Activated CD8-positive, alpha-beta memory T cell treated with anti-CD3 and anti-CD28 coated beads, Interleukin-2, amount 10 ng/mL, durations not matched to agents 7 days and 5 days (primary cell): ENCODE measurements at regions of chr10 and their contacts with region 1.

Region 1: GRCh38 chr10:102384053-102384452 is 11.5 kb upstream of the NFKB2 start:
- DNase-seq: no peak
- ATAC-seq: no peak
- H3K4me3 Mint-ChIP-seq: no peak overlapping the region
- H3K27ac Mint-ChIP-seq: no peak overlapping the region
- H3K4me1 Mint-ChIP-seq: no peaks in the 10 kb centered on the region
- H3K27me3 Mint-ChIP-seq: no peaks in the 10 kb centered on the region

Region 2: GRCh38 chr10:101774589-101775272 is 609.3 kb before region 1 on chr10:
- CTCF ChIA-PET with region 1: no interaction called
- DNase-seq: no peak
- ATAC-seq: no peak
- H3K4me3 Mint-ChIP-seq: no peak overlapping the region
- H3K27ac Mint-ChIP-seq: no peak overlapping the region
- H3K4me1 Mint-ChIP-seq: peaks cover 12% of the 10 kb centered on the region
- H3K27me3 Mint-ChIP-seq: peaks cover 69% of the 10 kb centered on the region

Region 3: GRCh38 chr10:102334101-102334500 is 50.0 kb before region 1 on chr10:
- CTCF ChIA-PET with region 1: no interaction called
- DNase-seq: no peak
- ATAC-seq: no peak
- H3K4me3 Mint-ChIP-seq: no peak overlapping the region
- H3K27ac Mint-ChIP-seq: no peak overlapping the region
- H3K4me1 Mint-ChIP-seq: peaks cover 10% of the 10 kb centered on the region
- H3K27me3 Mint-ChIP-seq: no peaks in the 10 kb centered on the region

Region 4: GRCh38 chr10:102399217-102400089 is 15.4 kb after region 1 on chr10:
- CTCF ChIA-PET with region 1: interaction called, 10 read pairs
- DNase-seq: peak; percentile 92
- ATAC-seq: peak; percentile 66
- H3K4me3 Mint-ChIP-seq: peak overlapping the region; percentile 52
- H3K27ac Mint-ChIP-seq: peak overlapping the region; percentile 59
- H3K4me1 Mint-ChIP-seq: peaks cover 36% of the 10 kb centered on the region
- H3K27me3 Mint-ChIP-seq: no peaks in the 10 kb centered on the region

Region 5: DNA sequence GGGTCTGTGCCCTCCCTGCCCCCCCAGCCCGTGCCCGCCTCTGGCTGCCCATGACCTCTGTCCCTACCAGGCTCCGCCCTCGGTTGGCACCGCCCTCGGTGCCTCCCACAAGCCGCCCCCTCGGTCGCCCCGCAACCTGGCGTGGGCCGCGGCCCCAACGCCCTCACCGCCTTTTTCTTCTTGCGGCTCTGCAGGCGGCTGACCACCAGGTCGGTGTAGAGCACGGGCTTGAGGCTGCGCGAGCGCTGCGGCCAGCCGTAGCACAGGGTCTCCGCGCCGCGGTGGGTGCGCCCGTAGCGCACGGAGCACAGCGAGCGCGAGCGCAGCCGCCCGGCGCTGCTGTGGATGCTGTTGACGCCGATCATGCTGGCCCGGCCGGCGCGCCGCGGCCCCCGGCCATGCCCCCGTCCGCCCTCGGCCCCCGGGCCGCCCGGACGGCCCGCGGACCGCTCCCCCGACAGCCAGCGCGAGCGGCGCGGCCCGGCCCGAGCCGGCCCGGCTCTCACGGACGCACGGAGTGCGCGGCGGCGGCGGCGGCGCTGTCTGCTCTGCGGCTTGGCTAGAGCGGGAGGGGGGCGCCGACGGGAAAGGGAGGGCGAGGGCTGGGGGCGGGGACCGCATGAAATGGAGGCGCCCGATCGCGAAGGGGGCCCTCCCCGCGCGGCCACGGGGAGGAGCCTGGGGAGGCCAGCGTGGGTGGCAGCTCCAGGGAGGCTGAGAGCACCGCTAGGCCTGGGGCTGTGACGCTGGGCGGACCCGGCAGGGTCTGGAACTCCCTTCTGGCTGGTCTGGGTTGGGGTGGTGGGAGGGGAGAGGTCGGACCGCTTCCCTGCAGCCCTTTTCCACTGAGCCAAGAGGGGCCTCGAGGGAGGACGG is 24.9 kb after region 1 on chr10:
- CTCF ChIA-PET with region 1: interaction called, 10 read pairs
- DNase-seq: peak; percentile 65
- ATAC-seq: peak; percentile 57
- H3K4me3 Mint-ChIP-seq: peak overlapping the region; percentile 42
- H3K27ac Mint-ChIP-seq: no peak overlapping the region
- H3K4me1 Mint-ChIP-seq: peaks cover 29% of the 10 kb centered on the region
- H3K27me3 Mint-ChIP-seq: peaks cover 42% of the 10 kb centered on the region

Region 6: DNA sequence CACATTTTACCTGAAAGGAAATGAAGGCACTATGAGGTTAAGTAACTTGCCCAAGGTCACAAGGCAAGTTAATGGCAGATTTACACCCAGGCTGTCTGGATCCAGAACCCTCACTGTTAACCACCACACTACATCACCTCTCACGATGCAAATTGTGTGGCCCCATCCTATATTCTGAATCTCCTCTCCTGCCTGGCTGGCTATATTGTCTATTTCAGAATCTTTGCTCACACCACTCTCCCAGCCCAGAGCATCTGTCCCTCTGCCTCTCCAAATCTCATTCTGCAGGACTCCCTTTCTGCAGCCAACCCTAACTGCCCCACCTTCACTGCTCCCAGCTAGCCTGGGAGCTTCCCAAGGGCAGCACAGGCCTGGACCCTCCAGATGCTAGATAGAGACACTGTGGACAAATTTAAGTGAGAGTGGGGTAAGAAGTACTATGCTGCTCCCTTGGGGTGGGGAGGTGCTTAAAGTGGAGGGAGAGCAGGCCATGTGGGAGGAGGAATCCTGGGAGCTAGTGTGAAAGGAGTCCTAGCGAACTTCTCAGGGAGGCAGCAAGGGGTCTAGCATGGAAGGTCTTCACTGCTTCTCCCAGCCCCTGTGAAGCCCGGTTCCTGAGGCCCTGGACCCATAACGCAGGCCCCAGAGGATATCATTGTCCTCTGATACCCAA is 47.5 kb after region 1 on chr10:
- CTCF ChIA-PET with region 1: no interaction called
- DNase-seq: no peak
- ATAC-seq: no peak
- H3K4me3 Mint-ChIP-seq: peak overlapping the region; percentile 91
- H3K27ac Mint-ChIP-seq: peak overlapping the region; percentile 95
- H3K4me1 Mint-ChIP-seq: peaks cover 50% of the 10 kb centered on the region
- H3K27me3 Mint-ChIP-seq: no peaks in the 10 kb centered on the region